ENCODE measurements at regions of chr20 and their contacts with region 1.

Region 1: DNA sequence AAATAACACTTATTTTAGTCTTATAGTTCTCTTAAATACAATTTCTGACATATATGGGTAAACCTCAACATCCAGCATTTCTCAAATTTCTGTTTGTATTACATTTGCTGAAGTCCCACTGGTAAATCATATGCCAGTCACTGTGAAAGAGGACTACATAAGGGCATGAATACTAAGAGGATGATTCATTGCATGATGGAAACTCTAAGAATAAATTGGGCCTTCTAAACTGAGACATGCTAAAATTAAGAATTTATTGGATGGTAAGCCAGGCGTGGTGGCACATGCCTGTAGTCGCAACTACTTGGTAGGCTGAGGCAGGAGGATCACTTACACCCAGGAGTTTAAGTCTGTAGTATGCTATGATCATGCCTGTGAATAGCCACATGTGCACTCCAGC is 12.1 kb downstream of the DEFB123 start:
- DNase-seq: no peak
- ATAC-seq: no peak
- H3K4me3 ChIP-seq: no peak overlapping the region
- H3K27ac ChIP-seq: no peak overlapping the region
- H3K4me1 ChIP-seq: no peaks in the 10 kb centered on the region
- H3K27me3 ChIP-seq: no peaks in the 10 kb centered on the region
- CTCF ChIP-seq: no peak
- POLR2A ChIP-seq: no peak
- RAD21 ChIP-seq: no peak

Region 2: GRCh38 chr20:31440012-31441002 is 12.3 kb before region 1 on chr20 and contains the start of gene DEFB123:
- CTCF ChIA-PET with region 1: interaction called, 10 read pairs
- POLR2A ChIA-PET with region 1: interaction called, 3 read pairs
- RAD21 ChIA-PET with region 1: no interaction called
- intact Hi-C with region 1: no loop called
- DNase-seq: no peak
- ATAC-seq: peak; percentile 55
- H3K4me3 ChIP-seq: no peak within 1 kb of the TSS
- H3K27ac ChIP-seq: no peak within 1 kb of the TSS
- H3K4me1 ChIP-seq: no peaks in the 10 kb centered on the region
- H3K27me3 ChIP-seq: no peaks in the 10 kb centered on the region
- CTCF ChIP-seq: peak in 2 of 3 experiments; percentile 51 to 72; a peak in 4 of 6 replicates
- POLR2A ChIP-seq: no peak
- RAD21 ChIP-seq: no peak
- total RNA-seq, gene DEFB123: not detected